CD4-positive, alpha-beta memory T cell (primary cell): ENCODE measurements at regions of chrX and their contacts with region 1.

Region 1: GRCh38 chrX:30971774-30972603 is 82.9 kb upstream of the TAB3 start:
- DNase-seq: peak in 3 of 5 donors; percentile 12 to 26 (median 16)
- H3K4me3 ChIP-seq: no peak overlapping the region
- H3K4me3 Mint-ChIP-seq: peak overlapping the region; percentile 42 to 87 (median 81)
- H3K27ac ChIP-seq: no peak overlapping the region
- H3K27ac Mint-ChIP-seq: peak overlapping the region in 4 of 7 donors; percentile 2 to 41 (median 22)
- H3K4me1 ChIP-seq: no peaks in the 10 kb centered on the region
- H3K4me1 Mint-ChIP-seq: peaks cover 3 to 15% (median 11%) of the 10 kb centered on the region in 4 donors
- H3K27me3 ChIP-seq: no peaks in the 10 kb centered on the region
- H3K27me3 Mint-ChIP-seq: no peaks in the 10 kb centered on the region

Region 2: GRCh38 chrX:30735839-30736238 is 236.2 kb before region 1 on chrX:
- CTCF ChIA-PET with region 1: interaction called, 6 read pairs
- POLR2A ChIA-PET with region 1: no interaction called
- intact Hi-C with region 1: loop called (anchors 1 kb)
- DNase-seq: peak; percentile 58 to 66 (median 60)
- H3K4me3 ChIP-seq: no peak overlapping the region
- H3K4me3 Mint-ChIP-seq: peak overlapping the region in 2 of 8 donors; percentile 23 to 26
- H3K27ac ChIP-seq: no peak overlapping the region
- H3K27ac Mint-ChIP-seq: no peak overlapping the region
- H3K4me1 ChIP-seq: no peaks in the 10 kb centered on the region
- H3K4me1 Mint-ChIP-seq: peaks cover 0 to 5% (median 3%) of the 10 kb centered on the region in 4 donors
- H3K27me3 ChIP-seq: no peaks in the 10 kb centered on the region
- H3K27me3 Mint-ChIP-seq: no peaks in the 10 kb centered on the region

Region 3: DNA sequence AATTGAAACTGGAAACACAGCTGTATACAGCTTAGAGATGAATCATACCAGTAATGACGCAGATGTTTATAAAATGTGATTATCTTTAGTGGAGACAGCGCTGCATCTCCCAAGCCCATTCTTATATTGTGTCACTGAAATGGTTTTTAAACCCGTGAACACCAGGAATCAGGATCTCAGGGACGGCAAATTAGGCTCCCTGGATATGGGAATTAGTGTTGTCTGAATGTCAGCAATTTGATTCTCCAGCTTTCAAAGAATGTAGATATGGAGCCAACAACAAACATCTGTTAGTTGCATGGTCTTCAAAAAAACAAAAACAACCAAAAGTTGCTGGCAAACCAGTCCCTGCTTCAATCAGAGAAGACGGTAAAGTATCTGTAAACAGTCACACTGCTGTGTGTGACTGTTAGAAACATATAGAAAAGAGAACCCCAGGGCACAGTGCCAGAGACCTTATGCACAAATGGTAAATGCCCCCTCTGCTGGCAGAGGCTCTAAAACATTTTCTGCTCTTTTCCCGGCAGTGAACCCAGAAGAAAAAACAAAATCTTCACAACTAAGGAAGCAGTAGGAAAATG is 451.7 kb after region 1 on chrX:
- CTCF ChIA-PET with region 1: no interaction called
- POLR2A ChIA-PET with region 1: no interaction called
- intact Hi-C with region 1: loop called (anchors 5 kb)
- DNase-seq: no peak
- H3K4me3 ChIP-seq: no peak overlapping the region
- H3K4me3 Mint-ChIP-seq: no peak overlapping the region
- H3K27ac ChIP-seq: no peak overlapping the region
- H3K27ac Mint-ChIP-seq: no peak overlapping the region
- H3K4me1 ChIP-seq: no peaks in the 10 kb centered on the region
- H3K4me1 Mint-ChIP-seq: no peaks in the 10 kb centered on the region
- H3K27me3 ChIP-seq: no peaks in the 10 kb centered on the region
- H3K27me3 Mint-ChIP-seq: no peaks in the 10 kb centered on the region

Region 4: DNA sequence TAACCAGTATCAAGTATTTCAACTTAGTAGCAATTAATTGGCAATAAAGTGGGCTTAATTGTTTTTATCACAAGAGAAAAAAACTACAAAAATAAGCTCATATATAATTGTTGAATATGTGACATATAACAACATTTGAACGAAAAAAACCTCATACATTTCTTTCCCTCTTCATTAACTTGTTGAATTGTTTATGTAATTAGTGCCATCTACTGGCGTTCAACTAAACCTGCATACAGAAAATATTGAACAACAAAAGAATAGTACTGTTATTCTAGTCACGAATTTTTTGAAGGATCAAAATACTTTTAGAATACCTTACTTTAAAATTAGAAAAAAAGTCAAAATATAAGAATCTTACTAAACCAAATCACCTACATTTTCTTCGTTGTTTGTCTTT is 686.4 kb after region 1 on chrX:
- CTCF ChIA-PET with region 1: no interaction called
- POLR2A ChIA-PET with region 1: no interaction called
- intact Hi-C with region 1: loop called (anchors 5 kb)
- DNase-seq: peak in 3 of 5 donors; percentile 0 to 1 (median 1)
- H3K4me3 ChIP-seq: no peak overlapping the region
- H3K4me3 Mint-ChIP-seq: no peak overlapping the region
- H3K27ac ChIP-seq: no peak overlapping the region
- H3K27ac Mint-ChIP-seq: no peak overlapping the region
- H3K4me1 ChIP-seq: no peaks in the 10 kb centered on the region
- H3K4me1 Mint-ChIP-seq: no peaks in the 10 kb centered on the region
- H3K27me3 ChIP-seq: no peaks in the 10 kb centered on the region
- H3K27me3 Mint-ChIP-seq: no peaks in the 10 kb centered on the region